Endothelial cell of umbilical vein (primary cell): ENCODE measurements at regions of chr17 and their contacts with region 1.

Region 1: GRCh38 chr17:65100316-65101140 is 36.6 kb upstream of the RGS9 start:
- DNase-seq: peak; percentile 66
- H3K4me3 ChIP-seq: peak overlapping the region; percentile 20 to 37 (median 32)
- H3K27ac ChIP-seq: no peak overlapping the region
- H3K4me1 ChIP-seq: peaks cover 8% of the 10 kb centered on the region
- H3K27me3 ChIP-seq: peaks cover 0 to 5% of the 10 kb centered on the region in 2 experiments
- CTCF ChIP-seq: peak; percentile 82 to 88
- POLR2A ChIP-seq: no peak

Region 2: DNA sequence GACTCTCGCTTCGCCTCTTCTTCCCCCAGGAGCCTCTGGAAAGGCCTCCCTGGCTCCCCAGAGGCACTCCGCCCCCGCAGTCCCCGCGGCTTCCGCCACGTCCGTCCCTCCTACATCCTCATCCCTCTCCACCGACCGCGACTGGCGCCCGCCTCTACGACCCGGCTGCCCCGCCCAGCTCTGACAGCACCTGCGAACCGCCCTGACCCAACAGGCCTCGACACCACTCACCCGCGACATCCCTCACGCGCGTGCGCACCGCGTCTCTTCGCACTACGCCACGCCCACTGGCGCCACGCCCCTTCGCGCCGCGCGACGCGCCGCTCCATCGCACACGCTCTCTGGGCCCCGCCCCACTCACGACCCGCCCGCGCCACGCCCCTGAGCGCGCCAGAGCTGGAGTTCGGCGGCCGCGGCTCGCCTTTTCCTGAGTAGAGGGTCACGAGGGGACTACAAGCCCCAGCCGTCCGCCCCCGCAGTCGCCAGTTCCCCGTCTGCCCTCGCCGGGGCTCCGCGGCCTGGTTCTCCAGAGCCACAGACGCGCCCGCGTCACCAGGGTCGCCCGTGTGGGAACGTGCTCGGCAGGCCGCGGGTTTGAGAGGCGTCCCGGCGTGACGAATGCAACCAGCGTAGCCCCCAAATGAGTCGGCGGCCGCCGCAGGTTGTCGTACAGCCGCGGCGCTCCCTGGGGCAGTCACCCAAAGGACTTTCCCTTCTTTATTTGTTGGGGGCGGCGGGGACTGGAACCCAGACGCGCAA is 125.0 kb before region 1 on chr17:
- CTCF ChIA-PET with region 1: interaction called, 11 read pairs
- POLR2A ChIA-PET with region 1: interaction called, 4 read pairs
- dilution Hi-C with region 1: no loop called
- intact Hi-C with region 1: loop called (anchors 2 kb)
- DNase-seq: peak; percentile 96
- H3K4me3 ChIP-seq: peak overlapping the region; percentile 19 to 77 (median 55)
- H3K27ac ChIP-seq: peak overlapping the region; percentile 90
- H3K4me1 ChIP-seq: peaks cover 17% of the 10 kb centered on the region
- H3K27me3 ChIP-seq: no peaks in the 10 kb centered on the region
- CTCF ChIP-seq: no peak
- POLR2A ChIP-seq: peak; percentile 78

Region 3: DNA sequence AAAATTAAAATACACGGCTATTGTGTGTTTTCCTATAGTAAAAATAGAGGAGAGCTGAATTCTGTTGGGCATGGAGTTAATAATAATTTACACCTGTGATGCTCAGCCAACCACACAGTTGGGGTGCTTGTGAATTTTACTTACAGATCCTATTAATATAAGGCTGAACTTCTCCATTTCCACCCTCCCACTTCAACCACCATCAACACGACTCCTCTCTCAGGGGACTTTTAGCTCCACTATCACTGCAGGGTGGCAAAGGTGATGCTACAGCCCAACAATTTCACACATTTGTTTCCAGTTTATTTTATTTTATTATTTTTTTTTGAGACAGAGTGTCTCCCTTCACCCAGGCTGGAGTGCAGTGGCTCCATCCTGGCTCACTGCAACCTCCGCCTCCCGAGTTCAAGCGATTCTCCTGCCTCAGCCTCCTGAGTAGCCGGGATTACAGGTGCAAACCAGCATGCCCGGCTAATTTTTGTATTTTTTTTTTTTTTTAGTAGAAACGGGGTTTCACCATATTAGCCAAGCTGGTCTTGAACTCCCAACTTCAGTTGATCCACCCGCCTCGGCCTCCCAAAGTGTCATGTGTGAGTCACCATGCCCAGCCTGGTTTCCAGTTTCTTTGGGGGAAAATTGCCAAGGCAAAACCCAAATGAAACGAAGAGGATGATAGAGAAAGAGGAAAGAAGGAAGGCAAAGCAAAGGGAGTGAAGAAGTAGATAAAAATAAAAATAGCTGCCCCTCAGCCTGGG is 101.9 kb before region 1 on chr17:
- CTCF ChIA-PET with region 1: no interaction called
- POLR2A ChIA-PET with region 1: no interaction called
- dilution Hi-C with region 1: no loop called
- intact Hi-C with region 1: no loop called
- DNase-seq: no peak
- H3K4me3 ChIP-seq: no peak overlapping the region
- H3K27ac ChIP-seq: no peak overlapping the region
- H3K4me1 ChIP-seq: no peaks in the 10 kb centered on the region
- H3K27me3 ChIP-seq: no peaks in the 10 kb centered on the region
- CTCF ChIP-seq: no peak
- POLR2A ChIP-seq: no peak

Region 4: DNA sequence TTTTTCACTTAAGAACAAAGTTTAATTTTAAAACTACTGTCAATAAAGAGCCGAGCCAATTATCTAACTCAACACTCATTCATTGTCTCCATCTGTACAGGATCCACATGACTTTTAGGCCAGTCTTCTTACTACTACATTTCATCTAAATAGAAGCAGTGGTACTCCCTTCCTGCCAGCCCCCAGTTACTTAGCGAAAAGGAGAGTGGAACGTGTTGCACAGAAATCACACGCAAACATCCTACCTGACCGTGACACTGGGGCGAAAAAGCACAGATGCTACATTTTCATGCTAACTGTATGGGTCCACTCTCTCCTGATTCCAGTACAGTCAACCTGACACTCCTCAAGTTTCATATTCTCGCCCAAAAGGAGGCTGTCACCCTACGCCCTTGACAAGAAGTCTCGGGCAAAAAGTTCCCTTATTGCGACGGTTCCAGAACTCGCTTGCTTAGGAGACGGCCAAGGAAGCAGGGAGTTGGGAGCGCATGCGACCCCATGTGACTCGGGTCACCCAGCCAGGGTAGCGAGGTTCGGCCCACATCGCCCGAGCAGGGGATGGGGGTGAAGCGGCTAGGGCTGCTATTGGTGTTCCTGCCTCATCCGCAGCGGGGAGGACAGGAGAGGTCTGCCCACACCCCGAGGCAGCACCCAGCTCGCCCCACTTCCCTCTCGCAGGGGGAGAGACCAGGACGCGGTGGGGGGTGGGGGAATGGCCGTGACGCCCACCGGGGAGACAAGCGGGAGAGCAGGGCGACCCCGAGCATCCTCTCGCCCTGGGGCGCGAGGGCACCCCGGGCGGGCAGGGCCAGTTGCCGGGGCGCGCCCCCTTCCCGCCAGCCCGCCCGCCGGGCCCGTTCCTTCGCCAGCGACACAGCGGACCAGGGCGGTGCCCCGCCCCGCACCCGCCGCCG is 44.9 kb before region 1 on chr17:
- CTCF ChIA-PET with region 1: interaction called, 20 read pairs
- POLR2A ChIA-PET with region 1: no interaction called
- dilution Hi-C with region 1: no loop called
- intact Hi-C with region 1: loop called (anchors 1 kb)
- DNase-seq: peak; percentile 53
- H3K4me3 ChIP-seq: peak overlapping the region; percentile 34 to 78 (median 74)
- H3K27ac ChIP-seq: peak overlapping the region; percentile 2
- H3K4me1 ChIP-seq: peaks cover 11% of the 10 kb centered on the region
- H3K27me3 ChIP-seq: no peaks in the 10 kb centered on the region
- CTCF ChIP-seq: no peak
- POLR2A ChIP-seq: no peak

Region 5: DNA sequence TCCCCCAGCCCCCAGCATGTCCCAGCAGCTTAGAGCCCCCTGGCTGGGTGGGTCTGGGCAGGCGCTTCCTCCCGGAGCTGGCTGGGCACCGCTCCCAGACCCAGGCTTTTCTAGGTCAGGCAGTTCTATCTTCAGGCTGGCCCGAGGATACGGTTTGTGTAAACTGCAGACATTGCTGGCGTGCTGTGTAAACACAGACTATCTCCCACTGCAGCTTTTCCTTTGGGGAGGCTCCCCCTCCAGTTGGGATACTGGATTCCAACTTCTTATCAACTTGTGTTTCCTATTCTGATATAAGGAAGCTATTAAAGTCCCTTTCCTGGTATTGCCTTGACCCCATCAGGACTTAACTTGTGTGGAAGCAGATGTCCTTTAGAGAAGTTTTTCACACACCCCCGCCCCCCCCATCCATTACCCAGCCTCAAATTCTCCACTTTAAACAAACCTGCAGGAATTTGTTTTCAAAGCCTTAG is 25.7 kb before region 1 on chr17:
- CTCF ChIA-PET with region 1: interaction called, 20 read pairs
- POLR2A ChIA-PET with region 1: no interaction called
- dilution Hi-C with region 1: no loop called
- intact Hi-C with region 1: no loop called
- DNase-seq: peak; percentile 94
- H3K4me3 ChIP-seq: no peak overlapping the region
- H3K27ac ChIP-seq: no peak overlapping the region
- H3K4me1 ChIP-seq: peaks cover 2% of the 10 kb centered on the region
- H3K27me3 ChIP-seq: peaks cover 4 to 26% of the 10 kb centered on the region in 2 experiments
- CTCF ChIP-seq: no peak
- POLR2A ChIP-seq: peak; percentile 33

Region 6: DNA sequence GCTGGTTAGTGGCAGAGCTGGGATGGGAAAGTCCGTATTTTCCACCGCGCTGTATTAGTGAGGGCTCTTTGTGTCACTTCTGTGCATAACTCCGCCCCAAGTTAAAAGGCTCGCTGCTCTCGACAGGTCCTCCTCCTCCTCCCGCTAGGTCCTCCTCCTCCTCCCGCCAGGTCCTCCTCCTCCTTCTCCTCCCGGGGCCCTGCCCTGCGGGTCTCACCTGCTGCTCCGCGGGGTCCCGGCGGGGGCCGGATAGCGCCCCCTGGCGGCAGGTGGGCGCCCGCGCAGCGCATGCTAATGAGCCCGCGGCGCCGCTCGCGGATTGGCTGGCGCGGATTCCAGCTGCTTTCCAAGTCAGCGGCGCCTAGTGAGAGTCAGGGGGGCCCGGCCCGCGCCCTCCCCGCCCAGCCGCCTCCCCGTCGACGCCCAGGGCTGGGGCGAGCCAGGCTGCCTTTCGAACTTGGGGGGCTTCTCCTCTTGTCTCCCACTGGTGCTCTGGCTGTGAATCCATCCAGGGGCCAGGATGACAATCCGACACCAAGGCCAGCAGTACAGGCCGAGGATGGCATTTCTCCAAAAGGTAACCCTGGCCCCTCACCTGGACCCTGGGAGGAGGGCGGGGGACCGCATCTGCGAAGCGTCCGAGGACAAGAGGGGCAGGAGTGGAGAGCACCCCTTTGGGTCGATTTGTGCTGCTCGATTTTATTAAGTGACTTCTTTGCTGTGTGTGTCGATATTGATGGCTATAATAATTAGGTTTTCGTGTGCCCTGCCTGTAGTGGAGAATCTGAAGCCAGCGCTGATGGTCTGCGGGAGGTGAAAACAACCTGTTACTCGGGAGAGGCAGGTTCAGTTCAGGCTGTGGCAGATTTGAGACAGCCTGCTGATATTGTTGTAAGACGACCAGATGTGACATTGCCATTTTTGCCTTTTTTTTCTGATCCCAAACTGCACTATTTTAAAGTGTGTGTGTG is 36.8 kb after region 1 on chr17 and contains the start of gene RGS9:
- CTCF ChIA-PET with region 1: interaction called, 28 read pairs
- POLR2A ChIA-PET with region 1: no interaction called
- dilution Hi-C with region 1: no loop called
- intact Hi-C with region 1: loop called (anchors 2 kb)
- DNase-seq: peak; percentile 77
- H3K4me3 ChIP-seq: peak within 1 kb of the TSS in 2 of 3 experiments; percentile 17 to 24
- H3K27ac ChIP-seq: no peak within 1 kb of the TSS
- H3K4me1 ChIP-seq: peaks cover 5% of the 10 kb centered on the region
- H3K27me3 ChIP-seq: peaks cover 13 to 17% of the 10 kb centered on the region in 2 experiments
- CTCF ChIP-seq: peak; percentile 91 to 97
- POLR2A ChIP-seq: no peak
- total RNA-seq, gene RGS9: 1.4 and 1.7 TPM in 2 replicates